ENCODE measurements at regions of chr2 and their contacts with region 1.

Region 1: GRCh38 chr2:95121407-95122196 is at the start of gene MRPS5:
- H3K4me3 Mint-ChIP-seq: peak within 1 kb of the TSS; percentile 99
- H3K27ac Mint-ChIP-seq: peak within 1 kb of the TSS; percentile 95
- H3K4me1 Mint-ChIP-seq: peaks cover 38% of the 10 kb centered on the region
- H3K27me3 Mint-ChIP-seq: peaks cover 2% of the 10 kb centered on the region

Region 2: GRCh38 chr2:95106081-95106480 is 15.5 kb before region 1 on chr2:
- intact Hi-C with region 1: no loop called
- H3K4me3 Mint-ChIP-seq: no peak overlapping the region
- H3K27ac Mint-ChIP-seq: no peak overlapping the region
- H3K4me1 Mint-ChIP-seq: peaks cover 5% of the 10 kb centered on the region
- H3K27me3 Mint-ChIP-seq: no peaks in the 10 kb centered on the region

Region 3: GRCh38 chr2:95207111-95207961 is 85.7 kb after region 1 on chr2 and contains the start of gene ZNF892:
- intact Hi-C with region 1: loop called (anchors 1 kb)
- H3K4me3 Mint-ChIP-seq: peak within 1 kb of the TSS; percentile 90
- H3K27ac Mint-ChIP-seq: peak within 1 kb of the TSS; percentile 91
- H3K4me1 Mint-ChIP-seq: peaks cover 12% of the 10 kb centered on the region
- H3K27me3 Mint-ChIP-seq: peaks cover 6% of the 10 kb centered on the region